Ascending aorta (tissue), 2 donors: ENCODE measurements at regions of chr10 and their contacts with region 1.

Region 1: DNA sequence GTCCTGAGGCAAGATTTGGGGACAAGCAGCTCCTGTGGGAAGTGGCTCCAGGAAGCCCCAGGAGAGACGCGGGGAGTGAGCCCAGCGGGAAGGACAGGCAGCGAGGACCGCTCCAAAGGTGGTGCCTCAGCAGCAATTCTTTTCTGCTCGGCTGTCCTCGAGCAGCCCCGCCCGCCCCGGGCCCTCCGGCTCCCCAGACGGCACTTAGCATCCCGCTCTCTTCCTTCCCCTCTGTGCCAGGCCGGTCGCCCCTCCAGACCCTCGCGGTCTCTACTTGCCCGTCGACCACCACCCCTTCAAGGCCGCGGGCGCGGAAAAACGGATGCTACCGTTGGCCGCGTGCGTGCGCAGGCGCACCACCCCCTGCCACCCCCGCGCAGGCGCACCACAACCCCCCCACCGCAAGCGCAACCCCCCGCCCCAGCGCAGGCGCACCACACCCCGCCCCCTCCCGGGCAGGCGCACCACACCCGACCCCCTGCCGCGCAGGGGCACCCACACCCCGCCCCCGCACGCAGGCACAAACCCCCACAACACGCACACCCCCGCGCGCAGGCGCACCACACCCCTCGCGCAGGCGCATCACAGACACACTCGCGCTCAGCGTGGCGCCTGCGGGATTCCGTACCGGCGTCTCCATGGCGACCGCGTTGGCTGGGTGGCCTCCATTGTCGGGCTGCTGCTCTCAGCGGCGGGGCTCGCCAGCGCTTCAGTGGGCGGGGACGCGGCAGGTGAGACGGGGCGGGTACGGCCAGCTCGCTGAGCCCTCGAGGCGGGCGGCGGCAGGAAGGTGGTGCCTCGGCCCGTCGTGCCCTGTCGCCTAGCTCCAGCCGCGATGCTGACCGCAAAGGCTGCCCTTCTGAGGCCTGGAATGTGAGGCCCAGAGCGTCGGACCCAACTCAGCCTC is at the start of gene LRRC27:
- DNase-seq: peak; percentile 93 to 99
- H3K4me3 ChIP-seq: peak within 1 kb of the TSS; percentile 81 to 87
- H3K27ac ChIP-seq: peak within 1 kb of the TSS; percentile 67 to 76
- H3K4me1 ChIP-seq: peaks cover 4 to 20% of the 10 kb centered on the region in 2 donors
- H3K27me3 ChIP-seq: no peaks in the 10 kb centered on the region
- CTCF ChIP-seq: no peak
- total RNA-seq, gene LRRC27: 2.0 TPM

Region 2: DNA sequence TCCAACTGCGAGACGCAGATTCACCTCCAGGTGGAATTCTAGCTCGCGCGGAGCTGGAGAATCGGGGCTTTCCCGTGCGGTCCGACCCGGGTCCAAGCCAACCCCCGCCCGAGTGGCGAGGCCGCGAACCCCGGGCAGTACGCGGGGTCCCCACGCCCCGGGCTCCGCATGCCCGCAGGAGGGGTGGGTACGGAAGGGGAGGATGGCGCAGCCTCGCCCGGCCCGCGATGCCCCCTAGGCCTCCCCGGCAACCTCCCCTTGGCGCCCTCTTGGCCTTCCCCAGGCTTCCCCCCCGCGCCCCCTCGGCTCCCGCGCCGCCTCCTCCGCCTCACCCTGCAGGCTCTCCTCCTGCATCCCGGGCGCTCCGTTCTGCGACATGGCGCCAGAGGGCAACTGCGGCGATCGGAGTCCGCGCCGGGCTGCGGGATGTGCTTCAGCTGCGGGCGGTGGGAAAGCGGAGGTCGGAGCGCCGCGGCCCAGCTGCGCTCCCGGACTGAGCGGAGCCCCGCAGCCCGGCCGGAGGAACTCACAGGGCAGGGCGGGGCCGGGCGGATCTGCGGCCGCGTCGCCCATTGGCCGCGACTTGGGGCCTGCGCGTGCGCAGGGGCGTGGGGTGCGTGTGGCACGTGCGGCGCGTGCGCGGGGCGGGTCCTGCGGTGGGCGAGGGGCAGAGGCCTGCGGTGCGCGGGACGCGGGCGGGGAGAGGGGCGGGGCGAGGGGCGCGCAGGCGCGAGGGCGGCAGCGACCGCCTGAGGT is 350.2 kb before region 1 on chr10 and contains the start of gene BNIP3:
- intact Hi-C with region 1: loop called (anchors 5 kb)
- DNase-seq: peak; percentile 82 to 96
- H3K4me3 ChIP-seq: peak within 1 kb of the TSS; percentile 92 to 99
- H3K27ac ChIP-seq: peak within 1 kb of the TSS; percentile 48 to 67
- H3K4me1 ChIP-seq: peaks cover 6 to 11% of the 10 kb centered on the region in 2 donors
- H3K27me3 ChIP-seq: no peaks in the 10 kb centered on the region
- CTCF ChIP-seq: peak in 2 of 3 experiments; percentile 6 to 9
- total RNA-seq, gene BNIP3: 18.3 TPM

Region 3: DNA sequence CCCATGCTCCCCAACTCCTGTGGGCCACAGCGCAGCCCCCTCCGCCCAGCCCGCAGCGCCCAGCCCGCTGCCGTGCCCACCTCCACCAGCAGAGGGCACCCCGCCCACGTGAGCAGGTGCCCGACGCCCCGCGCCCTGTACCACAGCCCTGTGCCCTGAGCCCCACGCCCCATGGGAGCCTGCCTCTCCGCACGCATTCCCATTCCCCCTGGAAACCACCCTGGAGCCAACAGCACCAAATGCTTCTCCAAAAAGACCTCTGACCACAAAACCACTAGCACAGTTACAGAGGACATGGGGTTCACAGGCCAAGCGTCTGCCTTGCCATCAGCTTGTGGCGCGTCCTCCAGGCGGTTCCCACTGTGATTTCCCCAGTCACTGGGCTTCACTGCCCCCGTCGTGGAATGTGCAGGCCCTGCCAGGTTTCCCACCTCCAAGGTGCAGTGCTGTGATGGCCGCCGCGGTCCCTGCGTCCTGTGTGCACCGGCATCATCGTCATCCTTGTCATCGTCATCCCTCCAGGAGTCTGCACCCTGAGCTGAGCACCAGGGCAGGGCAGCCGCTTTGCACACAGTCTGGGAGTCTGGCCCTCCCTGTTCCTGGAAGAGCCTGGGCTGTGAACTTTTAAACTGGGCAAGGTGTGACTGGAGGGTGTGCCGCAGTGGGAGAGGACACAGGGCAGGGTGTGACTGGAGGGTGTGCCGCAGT is 127.0 kb after region 1 on chr10:
- intact Hi-C with region 1: loop called (anchors 5 kb)
- DNase-seq: no peak
- H3K4me3 ChIP-seq: no peak overlapping the region
- H3K27ac ChIP-seq: no peak overlapping the region
- H3K4me1 ChIP-seq: peaks cover 5 to 6% of the 10 kb centered on the region in 2 donors
- H3K27me3 ChIP-seq: no peaks in the 10 kb centered on the region
- CTCF ChIP-seq: peak; percentile 93 to 99 (median 98)

Region 4: GRCh38 chr10:133309111-133309719 is 977.4 kb after region 1 on chr10:
- intact Hi-C with region 1: loop called (anchors 5 kb)
- DNase-seq: peak; percentile 72 to 94
- H3K4me3 ChIP-seq: peak overlapping the region; percentile 92 to 93
- H3K27ac ChIP-seq: peak overlapping the region; percentile 87 to 91
- H3K4me1 ChIP-seq: peaks cover 2 to 25% of the 10 kb centered on the region in 2 donors
- H3K27me3 ChIP-seq: no peaks in the 10 kb centered on the region
- CTCF ChIP-seq: no peak